IMR-90 (cell line): ENCODE measurements at regions of chr3 and their contacts with region 1.

Region 1: DNA sequence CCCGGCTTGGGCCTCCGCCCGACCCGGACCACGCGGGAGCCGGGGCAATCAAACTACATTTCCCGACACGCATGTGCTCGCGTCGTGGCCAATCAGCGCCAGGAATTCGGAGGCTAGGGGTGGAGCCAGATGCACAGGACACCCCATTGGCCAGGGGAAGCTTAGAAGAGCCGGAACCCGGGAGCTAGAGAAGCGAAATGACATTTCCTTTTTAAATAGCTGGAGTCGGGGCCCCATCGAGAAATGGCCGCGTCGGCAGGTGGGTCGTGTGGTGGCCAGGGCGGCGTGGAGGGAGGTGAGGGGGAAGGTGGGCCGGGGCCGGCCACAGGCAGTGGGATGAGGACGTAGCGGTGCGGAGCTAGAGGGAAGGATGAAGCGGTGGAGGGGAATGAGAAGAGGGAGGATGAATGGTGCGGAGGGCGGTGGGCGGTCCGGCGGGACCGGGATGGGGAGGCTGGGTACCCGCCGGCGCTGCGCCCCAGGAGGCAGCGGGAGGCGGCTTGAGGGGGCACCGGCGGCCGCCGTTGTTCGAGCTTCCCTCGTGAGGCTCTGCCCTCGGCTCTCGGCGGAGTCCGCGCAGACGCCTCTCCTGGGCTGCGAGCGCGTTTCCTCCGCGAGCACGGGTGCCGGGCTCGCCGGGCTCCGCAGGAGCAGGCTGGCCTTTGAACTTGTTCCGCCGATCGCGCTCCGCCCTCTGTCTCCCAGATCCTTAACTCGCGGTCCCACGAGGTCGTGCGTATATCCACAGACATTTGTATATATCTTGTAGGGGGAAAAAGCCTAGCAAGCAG is at the start of gene KBTBD8:
- DNase-seq: peak; percentile 98
- ATAC-seq: peak; percentile 99
- H3K4me3 ChIP-seq: peak within 1 kb of the TSS; percentile 57
- H3K27ac ChIP-seq: peak within 1 kb of the TSS; percentile 35
- H3K4me1 ChIP-seq: no peaks in the 10 kb centered on the region
- H3K27me3 ChIP-seq: no peaks in the 10 kb centered on the region
- CTCF ChIP-seq: no peak
- POLR2A ChIP-seq: peak; percentile 78
- RAD21 ChIP-seq: no peak
- total RNA-seq, gene KBTBD8: 8.6 and 15.0 TPM in 2 replicates

Region 2: DNA sequence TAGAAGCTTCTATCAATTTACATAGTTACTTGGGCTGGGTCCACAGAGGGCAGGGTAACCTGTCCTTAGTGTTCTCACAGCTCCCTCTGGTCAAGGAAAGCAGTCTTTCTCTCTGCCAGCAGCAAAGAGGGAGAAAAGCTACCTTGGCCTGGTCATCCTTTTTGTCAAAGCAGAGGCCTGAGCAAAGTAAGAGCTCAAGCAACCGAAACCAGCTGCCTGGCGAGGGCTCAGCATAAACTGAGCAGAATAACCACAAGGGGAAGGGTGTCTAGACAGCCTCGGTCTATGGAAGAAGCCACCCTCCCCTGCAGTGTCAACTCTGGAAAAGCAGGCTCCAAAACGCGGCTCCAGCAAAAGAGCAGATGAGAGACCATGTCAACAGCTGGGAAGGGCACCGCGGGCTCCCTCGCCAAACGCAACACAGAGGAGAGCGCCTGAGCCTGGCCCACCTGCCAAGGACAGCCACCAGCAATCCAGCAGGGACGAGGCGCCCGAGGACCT is 514.9 kb before region 1 on chr3:
- CTCF ChIA-PET with region 1: no interaction called
- POLR2A ChIA-PET with region 1: no interaction called
- dilution Hi-C with region 1: no loop called
- in situ Hi-C with region 1: no loop called
- intact Hi-C with region 1: loop called (anchors 10 kb)
- DNase-seq: peak; percentile 54
- ATAC-seq: no peak
- H3K4me3 ChIP-seq: no peak overlapping the region
- H3K27ac ChIP-seq: peak overlapping the region; percentile 12; the same call in 1 of the 2 replicates
- H3K4me1 ChIP-seq: peaks cover 38% of the 10 kb centered on the region
- H3K27me3 ChIP-seq: no peaks in the 10 kb centered on the region
- CTCF ChIP-seq: 0 out of 2 replicates have a peak, but pooled peaks have one; percentile 4
- POLR2A ChIP-seq: no peak
- RAD21 ChIP-seq: no peak

Region 3: GRCh38 chr3:66797889-66798560 is 200.3 kb before region 1 on chr3:
- CTCF ChIA-PET with region 1: no interaction called
- POLR2A ChIA-PET with region 1: interaction called, 16 read pairs
- dilution Hi-C with region 1: no loop called
- in situ Hi-C with region 1: no loop called
- intact Hi-C with region 1: no loop called
- DNase-seq: peak; percentile 82
- ATAC-seq: peak; percentile 55
- H3K4me3 ChIP-seq: no peak overlapping the region
- H3K27ac ChIP-seq: peak overlapping the region; percentile 62
- H3K4me1 ChIP-seq: peaks cover 30% of the 10 kb centered on the region
- H3K27me3 ChIP-seq: no peaks in the 10 kb centered on the region
- CTCF ChIP-seq: no peak
- POLR2A ChIP-seq: no peak
- RAD21 ChIP-seq: no peak

Region 4: DNA sequence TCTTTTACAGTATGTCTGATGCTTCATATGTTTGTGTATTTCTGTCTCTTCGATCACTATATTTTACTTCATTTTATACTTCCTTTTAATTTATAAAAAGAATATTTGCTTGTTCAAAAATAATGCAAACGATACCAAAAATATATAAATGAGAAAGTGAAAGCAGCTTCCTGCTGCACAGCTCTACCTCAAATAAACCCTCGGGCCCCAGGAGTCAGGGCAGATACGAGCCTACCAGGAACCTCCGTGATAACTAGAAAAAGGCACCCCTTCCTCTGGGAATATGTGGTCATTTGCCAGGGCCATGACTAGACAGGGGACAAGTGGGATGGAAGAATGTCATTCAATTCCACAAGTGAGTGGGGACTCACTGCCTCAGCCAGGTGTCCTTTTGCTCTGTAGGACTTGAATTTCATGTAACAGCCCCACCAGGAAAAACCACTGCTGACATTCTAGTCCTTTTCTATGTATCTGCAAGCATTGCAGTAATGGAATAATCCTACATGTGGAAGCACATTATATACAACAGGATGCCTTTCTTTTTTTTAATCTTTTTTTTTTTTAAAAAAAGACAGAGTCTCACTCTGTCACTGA is 522.8 kb after region 1 on chr3:
- CTCF ChIA-PET with region 1: no interaction called
- POLR2A ChIA-PET with region 1: no interaction called
- dilution Hi-C with region 1: no loop called
- in situ Hi-C with region 1: no loop called
- intact Hi-C with region 1: no loop called
- DNase-seq: no peak
- ATAC-seq: no peak
- H3K4me3 ChIP-seq: no peak overlapping the region
- H3K27ac ChIP-seq: no peak overlapping the region
- H3K4me1 ChIP-seq: no peaks in the 10 kb centered on the region
- H3K27me3 ChIP-seq: no peaks in the 10 kb centered on the region
- CTCF ChIP-seq: no peak
- POLR2A ChIP-seq: no peak
- RAD21 ChIP-seq: no peak

Region 5: GRCh38 chr3:67654099-67654843 is 656.0 kb after region 1 on chr3 and contains the start of gene SUCLG2:
- CTCF ChIA-PET with region 1: no interaction called
- POLR2A ChIA-PET with region 1: no interaction called
- dilution Hi-C with region 1: no loop called
- in situ Hi-C with region 1: no loop called
- intact Hi-C with region 1: loop called (anchors 5 kb)
- DNase-seq: peak; percentile 75
- ATAC-seq: peak; percentile 99
- H3K4me3 ChIP-seq: peak within 1 kb of the TSS; percentile 81
- H3K27ac ChIP-seq: peak within 1 kb of the TSS; percentile 91
- H3K4me1 ChIP-seq: peaks cover 4% of the 10 kb centered on the region
- H3K27me3 ChIP-seq: no peaks in the 10 kb centered on the region
- CTCF ChIP-seq: no peak
- POLR2A ChIP-seq: peak; percentile 86
- RAD21 ChIP-seq: no peak; the same call in 1 of the 2 replicates
- total RNA-seq, gene SUCLG2: 34.6 and 45.5 TPM in 2 replicates